Activated CD4-positive, alpha-beta T cell treated with anti-CD3 and anti-CD28 coated beads, Interleukin-2, amount 10 ng/mL, durations not matched to agents 24 days and 14 days (primary cell): ENCODE measurements at regions of chr9 and their contacts with region 1.

Region 1: GRCh38 chr9:95127249-95128176 is 190.0 kb downstream of the FANCC start:
- DNase-seq: peak; percentile 92
- H3K4me3 Mint-ChIP-seq: no peak overlapping the region
- H3K27ac Mint-ChIP-seq: no peak overlapping the region
- H3K4me1 Mint-ChIP-seq: peaks cover 4% of the 10 kb centered on the region
- H3K27me3 Mint-ChIP-seq: no peaks in the 10 kb centered on the region

Region 2: GRCh38 chr9:94672811-94673487 is 454.6 kb before region 1 on chr9:
- intact Hi-C with region 1: loop called (anchors 5 kb)
- DNase-seq: no peak
- H3K4me3 Mint-ChIP-seq: no peak overlapping the region
- H3K27ac Mint-ChIP-seq: no peak overlapping the region
- H3K4me1 Mint-ChIP-seq: peaks cover 8% of the 10 kb centered on the region
- H3K27me3 Mint-ChIP-seq: peaks cover 23% of the 10 kb centered on the region

Region 3: DNA sequence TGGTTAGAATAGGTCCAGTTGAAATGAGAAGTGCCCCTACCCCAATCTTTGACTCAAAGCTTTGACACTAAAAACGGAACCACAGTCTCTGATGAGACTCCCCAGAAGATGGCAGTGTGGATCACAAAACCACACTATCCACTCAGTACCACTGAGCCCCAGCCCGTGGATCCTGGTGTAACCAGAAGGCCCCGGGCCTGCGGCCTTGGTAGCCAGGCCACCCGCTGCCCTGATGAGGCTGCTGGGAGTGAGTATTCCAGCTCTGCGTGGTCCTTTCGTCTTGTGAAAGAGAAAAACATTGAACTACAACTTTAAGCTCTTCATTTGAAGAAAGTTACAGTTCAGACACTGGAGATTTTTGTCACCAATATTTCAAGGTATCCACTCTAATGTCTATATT is 446.0 kb before region 1 on chr9:
- intact Hi-C with region 1: loop called (anchors 1 kb)
- DNase-seq: peak; percentile 86
- H3K4me3 Mint-ChIP-seq: no peak overlapping the region
- H3K27ac Mint-ChIP-seq: no peak overlapping the region
- H3K4me1 Mint-ChIP-seq: peaks cover 5% of the 10 kb centered on the region
- H3K27me3 Mint-ChIP-seq: peaks cover 41% of the 10 kb centered on the region

Region 4: DNA sequence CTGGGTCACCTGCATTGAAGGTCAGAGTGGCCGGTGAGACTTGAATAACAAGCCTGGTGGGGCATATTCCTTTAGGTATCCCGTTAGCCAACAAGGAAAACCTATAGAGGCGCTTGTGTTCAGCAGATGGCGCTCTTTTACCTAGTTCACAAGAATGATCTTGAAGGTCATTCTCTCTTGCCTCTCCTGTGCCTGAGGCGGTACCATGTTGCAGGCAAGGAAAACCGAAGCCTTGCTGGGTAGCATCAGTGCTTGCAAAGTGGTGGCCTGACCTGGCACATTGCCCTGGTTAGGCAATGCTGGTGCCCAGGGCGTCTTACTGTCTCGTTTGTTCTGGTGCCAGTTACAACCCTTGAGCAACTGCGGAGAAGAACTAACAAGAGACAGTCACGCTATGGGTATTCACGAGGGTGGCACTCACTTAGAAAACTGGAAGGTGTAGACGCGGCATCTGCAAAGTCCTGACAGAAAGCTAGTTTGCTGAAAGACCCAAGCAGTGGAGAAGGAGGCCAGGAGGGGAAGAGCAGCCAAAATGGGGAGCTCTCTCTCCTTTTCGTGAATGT is 344.3 kb before region 1 on chr9:
- intact Hi-C with region 1: loop called (anchors 1 kb)
- DNase-seq: peak; percentile 80
- H3K4me3 Mint-ChIP-seq: no peak overlapping the region
- H3K27ac Mint-ChIP-seq: no peak overlapping the region
- H3K4me1 Mint-ChIP-seq: peaks cover 11% of the 10 kb centered on the region
- H3K27me3 Mint-ChIP-seq: no peaks in the 10 kb centered on the region

Region 5: GRCh38 chr9:95197692-95198271 is 70.3 kb after region 1 on chr9:
- intact Hi-C with region 1: no loop called
- DNase-seq: peak; percentile 47
- H3K4me3 Mint-ChIP-seq: no peak overlapping the region
- H3K27ac Mint-ChIP-seq: no peak overlapping the region
- H3K4me1 Mint-ChIP-seq: peaks cover 2% of the 10 kb centered on the region
- H3K27me3 Mint-ChIP-seq: no peaks in the 10 kb centered on the region

Region 6: GRCh38 chr9:95268681-95269080 is 141.2 kb after region 1 on chr9:
- intact Hi-C with region 1: loop called (anchors 10 kb)
- DNase-seq: peak; percentile 75
- H3K4me3 Mint-ChIP-seq: no peak overlapping the region
- H3K27ac Mint-ChIP-seq: peak overlapping the region; percentile 30
- H3K4me1 Mint-ChIP-seq: peaks cover 38% of the 10 kb centered on the region
- H3K27me3 Mint-ChIP-seq: no peaks in the 10 kb centered on the region

Region 7: GRCh38 chr9:95317119-95317892 is 189.8 kb after region 1 on chr9 and contains the start of gene FANCC:
- intact Hi-C with region 1: no loop called
- DNase-seq: peak; percentile 96
- H3K4me3 Mint-ChIP-seq: peak within 1 kb of the TSS; percentile 91
- H3K27ac Mint-ChIP-seq: peak within 1 kb of the TSS; percentile 96
- H3K4me1 Mint-ChIP-seq: peaks cover 16% of the 10 kb centered on the region
- H3K27me3 Mint-ChIP-seq: peaks cover 23% of the 10 kb centered on the region
- total RNA-seq, gene FANCC: 16.7 and 18.0 TPM in 2 replicates